OCI-LY7 (cell line): ENCODE measurements at regions of chr5 and their contacts with region 1.

Region 1: DNA sequence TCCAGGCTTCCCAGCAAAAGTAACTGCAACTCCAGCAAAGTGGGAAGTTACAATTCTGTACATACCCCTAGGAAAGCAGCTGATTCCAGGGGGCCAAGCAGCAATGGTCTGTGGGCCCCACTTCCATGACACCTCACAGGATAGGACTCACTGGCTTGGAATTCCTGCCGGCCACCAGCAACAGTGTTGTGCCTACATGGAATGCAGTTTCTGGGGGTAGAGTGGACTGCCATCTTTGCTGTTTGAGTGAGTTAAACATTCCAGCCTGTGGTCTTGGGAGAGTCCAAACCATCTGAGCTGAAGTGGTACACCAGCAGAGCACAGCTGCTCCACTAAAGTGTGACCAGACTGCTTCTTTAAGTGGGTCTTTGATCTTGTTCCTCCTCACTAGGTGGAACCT is 13.4 kb upstream of the FBN2 start:
- DNase-seq: no peak
- H3K4me3 ChIP-seq: no peak overlapping the region
- H3K27ac ChIP-seq: no peak overlapping the region
- H3K4me1 ChIP-seq: no peaks in the 10 kb centered on the region
- CTCF ChIP-seq: no peak

Region 2: DNA sequence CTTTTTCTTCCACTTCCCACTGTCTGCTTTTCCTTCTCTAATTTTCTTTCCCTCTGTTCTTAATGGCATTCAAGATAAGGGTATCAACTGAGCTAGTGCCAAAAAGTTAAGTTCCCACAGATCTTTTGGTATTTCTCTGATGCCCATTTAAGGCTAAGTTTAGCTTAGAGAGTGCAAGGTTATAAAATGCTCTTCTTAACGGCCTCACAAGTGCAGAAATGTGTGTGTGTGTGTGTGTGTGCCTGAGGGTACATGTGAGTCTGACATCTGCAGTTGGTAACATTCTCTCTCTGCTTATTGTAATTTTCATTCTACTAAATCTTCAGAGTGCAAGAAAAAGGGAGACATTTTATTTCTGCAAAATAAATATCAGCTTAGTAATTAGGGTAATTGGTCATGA is 37.7 kb before region 1 on chr5:
- CTCF ChIA-PET with region 1: no interaction called
- POLR2A ChIA-PET with region 1: interaction called, 13 read pairs
- intact Hi-C with region 1: no loop called
- DNase-seq: no peak
- H3K4me3 ChIP-seq: no peak overlapping the region
- H3K27ac ChIP-seq: no peak overlapping the region
- H3K4me1 ChIP-seq: no peaks in the 10 kb centered on the region
- CTCF ChIP-seq: no peak